CD8-positive, alpha-beta T cell (primary cell): ENCODE measurements at regions of chr20 and their contacts with region 1.

Region 1: GRCh38 chr20:32945710-32946221 is 58.5 kb downstream of the SUN5 start:
- DNase-seq: peak in 3 of 9 experiments; percentile 20 to 66 (median 55)
- ATAC-seq: peak; percentile 96
- H3K4me3 ChIP-seq: no peak overlapping the region
- H3K4me3 Mint-ChIP-seq: peak overlapping the region; percentile 59
- H3K27ac ChIP-seq: peak overlapping the region in 1 of 2 experiments; percentile 10
- H3K27ac Mint-ChIP-seq: peak overlapping the region; percentile 90
- H3K4me1 ChIP-seq: peaks cover 19% of the 10 kb centered on the region
- H3K4me1 Mint-ChIP-seq: peaks cover 37% of the 10 kb centered on the region
- H3K27me3 ChIP-seq: no peaks in the 10 kb centered on the region
- H3K27me3 Mint-ChIP-seq: no peaks in the 10 kb centered on the region
- CTCF ChIP-seq: peak; percentile 79

Region 2: DNA sequence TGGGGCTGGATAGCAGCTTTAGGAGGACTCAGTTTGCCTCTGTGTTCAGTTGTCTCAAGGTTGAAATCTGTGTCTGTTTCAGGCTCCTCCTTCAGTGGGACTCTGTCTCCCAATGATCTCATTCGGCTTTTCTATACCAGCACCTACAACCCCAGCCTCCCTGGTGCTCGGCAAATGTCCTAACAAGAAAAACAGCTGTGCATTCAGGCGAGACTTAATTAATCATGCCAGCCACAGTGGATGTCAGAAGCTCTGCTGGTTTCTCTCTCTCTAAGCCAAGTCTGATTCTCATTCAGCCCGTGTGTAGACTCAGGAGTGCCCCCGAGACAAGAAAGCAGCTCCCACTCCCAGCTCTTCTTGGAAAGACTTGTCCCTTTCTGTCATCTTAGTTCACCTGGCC is 11.7 kb after region 1 on chr20:
- CTCF ChIA-PET with region 1: interaction called, 11 read pairs
- POLR2A ChIA-PET with region 1: no interaction called
- intact Hi-C with region 1: no loop called
- DNase-seq: no peak
- ATAC-seq: no peak
- H3K4me3 ChIP-seq: no peak overlapping the region
- H3K4me3 Mint-ChIP-seq: no peak overlapping the region
- H3K27ac ChIP-seq: no peak overlapping the region
- H3K27ac Mint-ChIP-seq: no peak overlapping the region
- H3K4me1 ChIP-seq: no peaks in the 10 kb centered on the region
- H3K4me1 Mint-ChIP-seq: peaks cover 4% of the 10 kb centered on the region
- H3K27me3 ChIP-seq: no peaks in the 10 kb centered on the region
- H3K27me3 Mint-ChIP-seq: no peaks in the 10 kb centered on the region
- CTCF ChIP-seq: no peak

Region 3: DNA sequence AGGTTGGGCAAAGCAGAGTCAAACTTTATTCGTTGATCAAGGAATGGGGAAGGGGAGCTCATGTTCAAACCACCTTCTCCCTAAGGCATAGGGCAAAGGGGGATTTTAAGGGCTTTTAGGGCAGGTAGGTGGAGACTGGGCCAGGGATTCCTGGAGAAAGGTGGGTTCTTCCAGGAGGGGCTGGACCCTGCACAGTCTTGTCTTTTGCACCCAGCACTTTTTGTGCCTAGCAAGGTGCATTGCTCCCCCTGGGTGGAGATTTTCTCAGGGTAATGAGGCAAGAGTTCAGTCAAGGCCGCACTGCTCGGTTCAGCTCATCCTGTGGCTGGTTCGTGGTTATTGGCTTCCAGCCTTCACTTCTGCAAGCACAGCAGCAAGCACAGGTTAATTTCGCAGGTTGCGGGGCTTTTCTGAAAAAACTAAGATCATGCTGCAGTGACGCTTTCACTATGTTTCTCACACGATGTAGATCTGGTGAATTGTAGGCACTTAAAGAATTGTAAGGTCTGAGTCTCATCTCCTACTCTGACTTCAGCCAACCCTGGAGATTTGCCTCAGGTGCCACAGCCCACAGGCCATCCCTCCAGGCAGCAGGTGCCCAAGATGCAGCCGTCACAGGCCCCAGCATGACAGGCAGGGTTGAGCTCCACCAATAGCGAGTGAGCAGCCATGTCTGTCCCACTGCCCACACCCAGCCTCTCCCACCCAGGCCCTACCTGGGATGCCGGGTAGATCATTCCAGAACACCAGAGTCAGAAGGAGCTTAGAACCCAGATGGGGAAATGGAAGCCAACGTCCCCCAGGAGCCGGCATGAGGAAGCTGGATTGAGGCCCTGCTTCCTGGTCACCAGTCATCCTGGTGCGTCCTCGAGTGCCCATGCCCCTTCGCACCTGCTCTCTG is 21.4 kb after region 1 on chr20:
- CTCF ChIA-PET with region 1: interaction called, 24 read pairs
- POLR2A ChIA-PET with region 1: interaction called, 12 read pairs
- intact Hi-C with region 1: loop called (anchors 2 kb)
- DNase-seq: peak in 8 of 9 experiments; percentile 22 to 91 (median 67)
- ATAC-seq: peak; percentile 41
- H3K4me3 ChIP-seq: peak overlapping the region in 1 of 2 experiments; percentile 21
- H3K4me3 Mint-ChIP-seq: peak overlapping the region; percentile 73
- H3K27ac ChIP-seq: peak overlapping the region; percentile 73 to 95
- H3K27ac Mint-ChIP-seq: no peak overlapping the region
- H3K4me1 ChIP-seq: peaks cover 81% of the 10 kb centered on the region
- H3K4me1 Mint-ChIP-seq: peaks cover 79% of the 10 kb centered on the region
- H3K27me3 ChIP-seq: no peaks in the 10 kb centered on the region
- H3K27me3 Mint-ChIP-seq: no peaks in the 10 kb centered on the region
- CTCF ChIP-seq: no peak

Region 4: DNA sequence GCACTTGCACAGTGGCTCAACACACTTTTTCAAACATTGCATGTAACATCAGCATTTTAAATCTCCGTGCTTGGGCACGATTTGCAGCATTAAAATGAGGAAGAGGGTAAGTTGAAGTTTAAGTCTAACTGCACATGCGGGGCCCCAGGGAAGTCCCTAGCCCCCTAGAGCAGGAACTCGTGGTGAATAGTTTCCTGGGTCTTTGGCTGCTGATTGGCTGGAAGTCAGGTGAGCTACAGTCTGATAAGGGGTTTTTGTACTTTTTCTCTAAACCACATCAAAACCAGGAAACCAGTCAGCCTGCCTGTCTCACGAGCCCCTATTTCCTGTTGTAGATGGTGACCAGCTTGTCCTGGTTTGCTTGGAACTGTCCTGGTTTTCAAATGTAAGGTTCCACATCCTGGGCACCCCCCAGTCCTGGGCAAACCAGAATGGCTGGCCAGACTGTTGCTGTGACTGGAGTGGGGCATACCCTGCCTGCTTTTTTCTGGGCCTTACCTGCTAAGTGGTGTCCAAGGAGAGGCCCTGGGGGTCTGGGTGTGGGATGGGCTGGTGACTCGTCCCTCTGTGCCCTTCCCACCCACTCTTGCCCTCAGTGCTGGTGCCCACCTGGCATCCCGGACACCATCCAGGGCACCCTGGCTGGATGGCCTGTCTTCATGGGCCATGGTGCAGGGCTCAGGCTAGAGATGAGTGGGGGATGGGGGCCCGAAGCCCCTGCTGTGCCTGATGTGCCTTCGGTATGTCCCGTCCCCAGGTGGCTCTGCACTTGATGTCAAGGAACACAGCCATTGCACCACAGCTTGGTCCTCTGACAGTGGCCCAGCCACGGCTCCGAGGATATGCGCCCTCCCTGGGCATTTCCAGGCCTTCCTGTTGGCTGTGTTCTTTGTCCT is 26.7 kb after region 1 on chr20:
- CTCF ChIA-PET with region 1: interaction called, 24 read pairs
- POLR2A ChIA-PET with region 1: interaction called, 12 read pairs
- intact Hi-C with region 1: loop called (anchors 2 kb)
- DNase-seq: peak; percentile 66 to 97 (median 83)
- ATAC-seq: peak; percentile 69
- H3K4me3 ChIP-seq: peak overlapping the region; percentile 12 to 42
- H3K4me3 Mint-ChIP-seq: no peak overlapping the region
- H3K27ac ChIP-seq: peak overlapping the region; percentile 73 to 95
- H3K27ac Mint-ChIP-seq: no peak overlapping the region
- H3K4me1 ChIP-seq: peaks cover 87% of the 10 kb centered on the region
- H3K4me1 Mint-ChIP-seq: peaks cover 45% of the 10 kb centered on the region
- H3K27me3 ChIP-seq: no peaks in the 10 kb centered on the region
- H3K27me3 Mint-ChIP-seq: no peaks in the 10 kb centered on the region
- CTCF ChIP-seq: no peak

Region 5: DNA sequence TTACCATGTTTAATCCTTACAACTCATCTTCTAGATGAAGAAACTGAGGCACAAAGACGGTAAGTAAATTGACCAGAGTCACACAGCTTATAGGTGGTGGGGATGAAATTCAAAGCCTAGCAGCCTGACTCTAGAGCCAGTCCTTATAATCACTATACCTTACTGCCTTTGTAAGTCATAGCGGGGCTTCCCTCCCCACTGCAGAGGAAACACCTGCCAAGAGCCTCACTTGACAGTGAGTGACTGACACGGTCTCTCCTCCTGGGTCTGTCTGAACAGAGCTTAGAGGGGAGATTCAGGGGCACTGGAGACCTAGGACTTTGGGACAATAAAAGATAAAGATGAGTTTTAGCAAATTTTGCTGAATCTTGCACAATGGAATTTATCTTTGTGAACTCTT is 45.6 kb after region 1 on chr20:
- CTCF ChIA-PET with region 1: interaction called, 12 read pairs
- POLR2A ChIA-PET with region 1: no interaction called
- intact Hi-C with region 1: loop called in 1 of 2 experiments (anchors 5 kb)
- DNase-seq: peak in 4 of 9 experiments; percentile 25 to 54 (median 37)
- ATAC-seq: peak; percentile 68
- H3K4me3 ChIP-seq: no peak overlapping the region
- H3K4me3 Mint-ChIP-seq: no peak overlapping the region
- H3K27ac ChIP-seq: no peak overlapping the region
- H3K27ac Mint-ChIP-seq: peak overlapping the region; percentile 45
- H3K4me1 ChIP-seq: peaks cover 38% of the 10 kb centered on the region
- H3K4me1 Mint-ChIP-seq: peaks cover 40% of the 10 kb centered on the region
- H3K27me3 ChIP-seq: no peaks in the 10 kb centered on the region
- H3K27me3 Mint-ChIP-seq: no peaks in the 10 kb centered on the region
- CTCF ChIP-seq: no peak

Region 6: GRCh38 chr20:33005132-33005566 is 59.4 kb after region 1 on chr20:
- CTCF ChIA-PET with region 1: interaction called, 15 read pairs
- POLR2A ChIA-PET with region 1: no interaction called
- intact Hi-C with region 1: loop called in 1 of 2 experiments (anchors 2 kb)
- DNase-seq: peak in 3 of 9 experiments; percentile 38 to 69 (median 58)
- ATAC-seq: no peak
- H3K4me3 ChIP-seq: no peak overlapping the region
- H3K4me3 Mint-ChIP-seq: no peak overlapping the region
- H3K27ac ChIP-seq: no peak overlapping the region
- H3K27ac Mint-ChIP-seq: no peak overlapping the region
- H3K4me1 ChIP-seq: peaks cover 11% of the 10 kb centered on the region
- H3K4me1 Mint-ChIP-seq: peaks cover 27% of the 10 kb centered on the region
- H3K27me3 ChIP-seq: no peaks in the 10 kb centered on the region
- H3K27me3 Mint-ChIP-seq: no peaks in the 10 kb centered on the region
- CTCF ChIP-seq: peak; percentile 64

Region 7: GRCh38 chr20:33097001-33097400 is 151.2 kb after region 1 on chr20:
- CTCF ChIA-PET with region 1: interaction called, 11 read pairs
- POLR2A ChIA-PET with region 1: interaction called, 3 read pairs
- intact Hi-C with region 1: loop called in 1 of 2 experiments (anchors 1 kb)
- DNase-seq: no peak
- ATAC-seq: no peak
- H3K4me3 ChIP-seq: no peak overlapping the region
- H3K4me3 Mint-ChIP-seq: no peak overlapping the region
- H3K27ac ChIP-seq: no peak overlapping the region
- H3K27ac Mint-ChIP-seq: no peak overlapping the region
- H3K4me1 ChIP-seq: peaks cover 3% of the 10 kb centered on the region
- H3K4me1 Mint-ChIP-seq: peaks cover 3% of the 10 kb centered on the region
- H3K27me3 ChIP-seq: no peaks in the 10 kb centered on the region
- H3K27me3 Mint-ChIP-seq: no peaks in the 10 kb centered on the region
- CTCF ChIP-seq: no peak

Region 8: GRCh38 chr20:33277471-33278441 is 332.0 kb after region 1 on chr20:
- CTCF ChIA-PET with region 1: no interaction called
- POLR2A ChIA-PET with region 1: no interaction called
- intact Hi-C with region 1: no loop called
- DNase-seq: no peak
- ATAC-seq: no peak
- H3K4me3 ChIP-seq: no peak overlapping the region
- H3K4me3 Mint-ChIP-seq: no peak overlapping the region
- H3K27ac ChIP-seq: no peak overlapping the region
- H3K27ac Mint-ChIP-seq: no peak overlapping the region
- H3K4me1 ChIP-seq: no peaks in the 10 kb centered on the region
- H3K4me1 Mint-ChIP-seq: no peaks in the 10 kb centered on the region
- H3K27me3 ChIP-seq: no peaks in the 10 kb centered on the region
- H3K27me3 Mint-ChIP-seq: peaks cover 13% of the 10 kb centered on the region
- CTCF ChIP-seq: no peak